ENCODE measurements at regions of chr18 and their contacts with region 1.

Region 1: GRCh38 chr18:3447895-3448837 is 1.8 kb upstream of the TGIF1 start:
- DNase-seq: peak; percentile 98
- H3K4me3 Mint-ChIP-seq: peak overlapping the region; percentile 95
- H3K27ac Mint-ChIP-seq: peak overlapping the region; percentile 99
- H3K4me1 Mint-ChIP-seq: peaks cover 12% of the 10 kb centered on the region
- H3K27me3 Mint-ChIP-seq: no peaks in the 10 kb centered on the region
- CTCF ChIP-seq: no peak

Region 2: DNA sequence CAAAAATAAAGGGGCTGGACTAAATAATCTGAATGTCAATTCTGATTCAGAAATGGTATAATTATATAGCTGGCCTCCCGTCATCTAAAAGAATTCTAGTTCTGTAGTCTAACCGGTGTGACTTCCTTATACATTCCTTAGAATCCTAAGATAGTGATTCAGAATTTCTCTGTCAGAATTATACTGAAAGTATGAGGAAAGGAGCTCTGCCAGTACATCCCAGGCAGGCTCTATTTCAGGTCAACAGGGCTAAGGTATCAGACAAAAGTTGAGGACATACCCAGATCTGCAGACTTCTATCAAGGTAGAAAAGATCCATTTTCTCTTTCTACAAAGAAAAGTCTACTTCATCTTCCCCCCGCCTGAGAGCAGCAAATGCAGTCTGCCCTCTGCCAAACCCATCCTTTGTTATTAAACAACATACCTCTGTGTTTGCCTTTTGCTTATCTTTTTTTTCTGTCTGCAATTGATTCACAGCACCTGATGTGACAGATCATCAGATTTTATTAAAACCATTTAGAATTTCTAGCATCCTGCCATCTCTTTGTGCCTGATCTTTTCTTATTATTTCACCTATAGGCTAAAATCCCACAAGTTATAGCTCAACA is 1005.3 kb before region 1 on chr18:
- CTCF ChIA-PET with region 1: no interaction called
- POLR2A ChIA-PET with region 1: no interaction called
- intact Hi-C with region 1: no loop called
- DNase-seq: no peak
- H3K4me3 Mint-ChIP-seq: no peak overlapping the region
- H3K27ac Mint-ChIP-seq: no peak overlapping the region
- H3K4me1 Mint-ChIP-seq: no peaks in the 10 kb centered on the region
- H3K27me3 Mint-ChIP-seq: no peaks in the 10 kb centered on the region
- CTCF ChIP-seq: no peak

Region 3: GRCh38 chr18:3261371-3262246 is 186.6 kb before region 1 on chr18 and contains the start of gene MYL12B:
- CTCF ChIA-PET with region 1: interaction called, 3 read pairs
- POLR2A ChIA-PET with region 1: interaction called, 74 read pairs
- intact Hi-C with region 1: no loop called
- DNase-seq: peak; percentile 78
- H3K4me3 Mint-ChIP-seq: peak within 1 kb of the TSS; percentile 80
- H3K27ac Mint-ChIP-seq: peak within 1 kb of the TSS; percentile 82
- H3K4me1 Mint-ChIP-seq: peaks cover 43% of the 10 kb centered on the region
- H3K27me3 Mint-ChIP-seq: no peaks in the 10 kb centered on the region
- CTCF ChIP-seq: no peak
- total RNA-seq, gene MYL12B: 175 and 229 TPM in 2 replicates

Region 4: DNA sequence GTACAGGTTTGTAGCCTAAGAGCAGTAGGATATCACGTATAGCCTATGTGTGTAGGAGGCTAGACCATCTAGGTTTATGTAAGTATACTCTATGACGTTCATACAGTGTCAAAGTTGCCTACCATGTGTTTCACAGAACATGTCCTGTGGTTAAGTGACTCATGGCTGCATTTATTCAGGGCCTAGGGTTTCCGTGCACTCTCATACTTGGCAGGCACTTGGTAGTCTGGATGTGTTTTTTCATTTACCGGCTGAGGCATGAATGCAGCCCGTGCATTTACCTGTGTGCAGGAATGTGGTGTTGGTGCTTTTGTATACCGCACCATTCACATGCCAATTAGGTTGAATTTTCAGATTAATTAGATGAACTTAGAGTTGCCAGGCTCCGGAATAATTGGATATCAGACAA is 142.8 kb before region 1 on chr18:
- CTCF ChIA-PET with region 1: interaction called, 5 read pairs
- POLR2A ChIA-PET with region 1: interaction called, 120 read pairs
- intact Hi-C with region 1: no loop called
- DNase-seq: peak; percentile 98
- H3K4me3 Mint-ChIP-seq: peak overlapping the region; percentile 58
- H3K27ac Mint-ChIP-seq: peak overlapping the region; percentile 91
- H3K4me1 Mint-ChIP-seq: peaks cover 17% of the 10 kb centered on the region
- H3K27me3 Mint-ChIP-seq: no peaks in the 10 kb centered on the region
- CTCF ChIP-seq: no peak

Region 5: GRCh38 chr18:3368193-3368592 is 80.0 kb before region 1 on chr18:
- CTCF ChIA-PET with region 1: interaction called, 4 read pairs
- POLR2A ChIA-PET with region 1: interaction called, 11 read pairs
- intact Hi-C with region 1: loop called (anchors 5 kb)
- DNase-seq: peak; percentile 85
- H3K4me3 Mint-ChIP-seq: peak overlapping the region; percentile 52
- H3K27ac Mint-ChIP-seq: peak overlapping the region; percentile 88
- H3K4me1 Mint-ChIP-seq: peaks cover 14% of the 10 kb centered on the region
- H3K27me3 Mint-ChIP-seq: no peaks in the 10 kb centered on the region
- CTCF ChIP-seq: no peak

Region 6: DNA sequence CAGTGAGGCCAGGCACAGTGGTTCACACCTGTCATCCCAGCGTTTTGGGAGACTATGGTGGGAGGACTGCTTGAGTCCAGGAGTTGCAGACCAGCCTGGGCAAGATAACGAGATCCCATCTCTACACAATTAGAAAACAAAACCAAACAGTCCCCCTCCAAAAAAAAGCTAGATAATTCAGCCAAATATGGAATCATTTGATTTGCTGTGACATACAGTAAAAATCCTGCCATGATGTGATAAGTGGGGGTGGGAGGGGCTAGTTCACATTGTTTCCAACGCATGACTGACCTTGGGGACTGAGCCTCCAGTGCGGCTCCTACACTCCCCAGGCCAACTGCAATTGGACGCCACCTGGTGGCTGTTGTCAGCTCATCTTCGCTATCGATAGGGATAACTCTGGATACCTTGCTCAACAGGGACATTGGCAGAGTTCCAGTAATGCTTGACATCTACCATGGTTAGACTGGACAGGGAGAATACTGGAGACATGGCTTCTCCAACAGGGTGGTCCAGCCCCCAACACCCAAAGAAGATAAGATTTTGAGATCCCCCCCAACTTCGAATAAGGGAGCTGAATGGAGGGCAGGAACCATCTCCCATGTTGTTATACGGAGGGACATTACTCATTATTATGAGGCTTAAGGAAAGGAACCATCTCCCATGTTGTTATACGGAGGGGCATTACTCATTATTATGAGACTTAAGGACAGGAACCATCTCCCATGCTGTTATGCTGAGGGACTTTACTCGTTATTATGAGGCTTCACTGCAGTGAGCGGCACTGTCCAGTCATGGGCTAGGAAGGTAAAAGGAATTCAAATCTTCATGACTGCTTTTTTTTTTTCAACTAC is 137.7 kb after region 1 on chr18:
- CTCF ChIA-PET with region 1: interaction called, 41 read pairs
- POLR2A ChIA-PET with region 1: interaction called, 71 read pairs
- intact Hi-C with region 1: no loop called
- DNase-seq: peak; percentile 90
- H3K4me3 Mint-ChIP-seq: no peak overlapping the region
- H3K27ac Mint-ChIP-seq: no peak overlapping the region
- H3K4me1 Mint-ChIP-seq: peaks cover 14% of the 10 kb centered on the region
- H3K27me3 Mint-ChIP-seq: no peaks in the 10 kb centered on the region
- CTCF ChIP-seq: peak; percentile 64

Region 7: GRCh38 chr18:3623769-3624545 is 175.8 kb after region 1 on chr18:
- CTCF ChIA-PET with region 1: interaction called, 3 read pairs
- POLR2A ChIA-PET with region 1: interaction called, 108 read pairs
- intact Hi-C with region 1: loop called (anchors 1 kb)
- DNase-seq: peak; percentile 95
- H3K4me3 Mint-ChIP-seq: peak overlapping the region; percentile 74
- H3K27ac Mint-ChIP-seq: peak overlapping the region; percentile 99
- H3K4me1 Mint-ChIP-seq: peaks cover 35% of the 10 kb centered on the region
- H3K27me3 Mint-ChIP-seq: no peaks in the 10 kb centered on the region
- CTCF ChIP-seq: no peak

Measured in MCF 10A (cell line).